CD14-positive monocyte (primary cell): ENCODE measurements at regions of chr6 and their contacts with region 1.

Region 1: DNA sequence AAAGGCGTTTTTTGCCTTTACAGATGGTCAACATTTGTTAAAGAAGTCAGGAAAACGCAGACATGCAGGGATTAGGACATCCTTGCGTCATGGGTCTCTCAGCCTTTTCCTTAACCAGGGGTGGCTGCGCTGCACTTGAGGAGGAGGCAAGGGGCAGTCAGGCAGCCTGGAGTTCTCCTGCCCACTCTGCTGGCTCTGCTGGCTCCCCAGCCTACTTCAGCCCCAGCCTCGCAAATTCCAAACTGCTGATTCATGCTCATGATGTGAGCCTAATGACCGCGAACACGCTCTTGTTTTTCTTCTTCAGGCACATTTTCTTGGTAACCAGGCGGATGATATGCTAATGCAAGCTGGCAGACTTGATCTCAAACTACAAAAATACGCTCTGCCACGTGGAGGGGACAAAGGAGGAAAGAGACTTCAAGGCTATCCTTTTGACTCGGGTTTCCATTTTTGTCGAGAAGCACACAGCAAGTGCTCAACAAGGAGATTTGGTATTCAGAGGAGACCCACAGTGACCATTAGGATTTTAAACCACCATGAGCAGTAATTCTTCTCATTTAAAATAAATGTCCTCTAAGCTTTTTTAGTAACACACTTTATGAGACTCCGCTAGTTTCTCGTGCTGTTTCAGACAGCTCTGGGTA is 290.3 kb upstream of the STXBP5 start:
- DNase-seq: peak; percentile 55 to 74 (median 61)
- H3K4me3 ChIP-seq: peak overlapping the region; percentile 30 to 71 (median 54)
- H3K4me3 Mint-ChIP-seq: peak overlapping the region; percentile 67 to 90
- H3K27ac ChIP-seq: peak overlapping the region; percentile 39 to 86
- H3K27ac Mint-ChIP-seq: peak overlapping the region; percentile 84 to 97 (median 92)
- H3K4me1 ChIP-seq: peaks cover 39 to 47% of the 10 kb centered on the region in 2 donors
- H3K4me1 Mint-ChIP-seq: peaks cover 52% of the 10 kb centered on the region
- H3K27me3 ChIP-seq: no peaks in the 10 kb centered on the region
- H3K27me3 Mint-ChIP-seq: peaks cover 0 to 9% (median 2%) of the 10 kb centered on the region in 3 donors
- CTCF ChIP-seq: no peak

Region 2: GRCh38 chr6:146679386-146679785 is 234.6 kb before region 1 on chr6:
- intact Hi-C with region 1: no loop called
- DNase-seq: peak; percentile 6 to 29 (median 16)
- H3K4me3 ChIP-seq: no peak overlapping the region
- H3K4me3 Mint-ChIP-seq: no peak overlapping the region
- H3K27ac ChIP-seq: no peak overlapping the region
- H3K27ac Mint-ChIP-seq: no peak overlapping the region
- H3K4me1 ChIP-seq: peaks cover 0 to under 1% of the 10 kb centered on the region in 2 donors
- H3K4me1 Mint-ChIP-seq: peaks cover 11% of the 10 kb centered on the region
- H3K27me3 ChIP-seq: no peaks in the 10 kb centered on the region
- H3K27me3 Mint-ChIP-seq: no peaks in the 10 kb centered on the region
- CTCF ChIP-seq: no peak

Region 3: DNA sequence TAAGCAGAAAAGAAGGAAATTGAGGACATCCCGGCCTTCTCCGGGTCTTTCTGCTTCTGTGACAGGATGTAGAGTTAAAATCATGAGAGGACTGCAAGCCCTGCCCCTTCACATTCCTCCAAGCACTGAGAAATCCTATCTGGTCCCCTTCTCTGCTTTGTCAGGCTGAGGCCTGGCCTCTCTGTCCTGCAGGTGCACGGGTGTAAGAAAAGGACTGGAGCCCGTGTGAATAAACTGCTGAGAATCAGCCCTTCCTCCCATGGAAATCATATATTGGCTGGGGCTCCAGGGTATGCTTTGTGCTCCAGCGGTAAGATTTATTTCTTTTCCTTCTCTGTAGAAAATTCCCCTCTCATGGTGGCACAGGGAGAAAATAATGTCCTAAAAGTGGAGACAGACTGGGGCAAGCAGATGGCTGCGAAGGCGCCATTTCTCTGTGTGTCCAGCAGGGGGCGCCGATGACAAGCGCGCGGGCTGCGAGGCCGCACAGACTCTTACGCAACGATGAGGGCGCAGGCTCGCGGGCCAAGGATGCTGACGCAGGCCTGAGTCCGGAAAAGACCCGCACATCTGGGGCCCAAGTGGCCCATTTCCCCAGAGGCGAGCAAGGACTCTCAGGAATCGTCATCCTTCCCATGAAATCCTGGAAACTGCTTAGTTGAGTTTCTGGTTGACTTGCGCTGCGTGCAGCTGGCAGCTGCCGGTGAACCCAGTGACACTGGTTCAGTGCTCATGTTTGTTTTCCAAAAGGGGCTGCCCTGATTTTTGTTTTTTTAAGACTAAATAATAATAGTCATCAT is 56.6 kb before region 1 on chr6:
- intact Hi-C with region 1: loop called in 1 of 2 experiments (anchors 5 kb)
- DNase-seq: peak; percentile 78 to 89 (median 82)
- H3K4me3 ChIP-seq: peak overlapping the region in 2 of 3 experiments; percentile 13 to 70
- H3K4me3 Mint-ChIP-seq: peak overlapping the region; percentile 32 to 44
- H3K27ac ChIP-seq: peak overlapping the region in 1 of 2 donors; percentile 65
- H3K27ac Mint-ChIP-seq: peak overlapping the region in 2 of 7 donors; percentile 59 to 78
- H3K4me1 ChIP-seq: peaks cover 6 to 7% of the 10 kb centered on the region in 2 donors
- H3K4me1 Mint-ChIP-seq: peaks cover 5% of the 10 kb centered on the region
- H3K27me3 ChIP-seq: no peaks in the 10 kb centered on the region
- H3K27me3 Mint-ChIP-seq: no peaks in the 10 kb centered on the region
- CTCF ChIP-seq: peak; percentile 98

Region 4: DNA sequence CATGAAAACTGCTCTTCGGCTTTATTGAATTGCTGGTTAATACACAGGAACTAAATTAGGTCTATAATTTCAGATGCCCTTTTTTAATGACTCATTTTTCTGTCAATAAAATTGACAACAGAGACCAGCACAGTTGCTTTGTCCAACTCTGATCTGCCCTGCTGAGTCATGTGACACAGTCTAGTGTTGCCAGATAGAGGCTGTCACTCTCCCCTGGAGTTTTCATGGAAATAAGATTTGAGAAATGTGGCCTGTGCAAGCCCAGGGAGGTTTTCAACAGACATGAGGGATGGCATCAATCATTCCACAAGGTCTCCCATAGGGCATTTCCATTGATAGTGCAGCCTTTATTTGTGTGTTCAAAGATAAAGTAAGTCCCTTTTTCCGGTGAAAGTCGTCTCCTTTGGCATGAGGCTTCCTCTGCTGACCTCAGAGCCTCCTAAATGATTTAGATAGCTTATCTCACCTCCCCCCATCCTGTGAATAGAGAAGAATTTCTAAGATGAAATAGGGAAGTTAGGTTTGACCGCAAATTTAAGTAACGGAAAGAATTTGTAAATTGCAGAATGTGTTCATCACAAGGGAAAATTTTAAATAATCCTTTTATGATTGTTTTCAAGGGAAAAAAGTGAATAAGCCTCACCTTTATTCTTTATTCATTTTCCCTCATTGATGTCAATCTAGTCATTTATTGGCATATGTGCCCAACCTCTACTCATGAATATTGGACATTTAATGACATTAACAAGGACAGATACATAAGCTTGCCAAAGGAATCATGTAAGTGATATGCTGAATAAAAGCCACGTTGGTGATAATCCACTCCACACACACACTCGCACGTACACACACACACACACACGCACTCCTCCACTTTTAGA is 37.5 kb before region 1 on chr6:
- intact Hi-C with region 1: loop called (anchors 5 kb)
- DNase-seq: peak; percentile 54 to 81 (median 74)
- H3K4me3 ChIP-seq: peak overlapping the region in 2 of 3 experiments; percentile 27 to 65
- H3K4me3 Mint-ChIP-seq: peak overlapping the region in 1 of 2 donors; percentile 81
- H3K27ac ChIP-seq: peak overlapping the region; percentile 51 to 85
- H3K27ac Mint-ChIP-seq: peak overlapping the region; percentile 90 to 99 (median 97)
- H3K4me1 ChIP-seq: peaks cover 40 to 52% of the 10 kb centered on the region in 2 donors
- H3K4me1 Mint-ChIP-seq: peaks cover 41% of the 10 kb centered on the region
- H3K27me3 ChIP-seq: no peaks in the 10 kb centered on the region
- H3K27me3 Mint-ChIP-seq: peaks cover 0 to 3% (median 0%) of the 10 kb centered on the region in 3 donors
- CTCF ChIP-seq: no peak

Region 5: GRCh38 chr6:147202516-147203312 is 288.7 kb after region 1 on chr6:
- intact Hi-C with region 1: loop called in 1 of 2 experiments (anchors 5 kb)
- DNase-seq: peak; percentile 91 to 96 (median 93)
- H3K4me3 ChIP-seq: peak overlapping the region; percentile 59 to 97 (median 83)
- H3K4me3 Mint-ChIP-seq: peak overlapping the region; percentile 91 to 99
- H3K27ac ChIP-seq: peak overlapping the region; percentile 72 to 90
- H3K27ac Mint-ChIP-seq: peak overlapping the region; percentile 92 to 98 (median 95)
- H3K4me1 ChIP-seq: peaks cover 16 to 27% of the 10 kb centered on the region in 2 donors
- H3K4me1 Mint-ChIP-seq: peaks cover 35% of the 10 kb centered on the region
- H3K27me3 ChIP-seq: no peaks in the 10 kb centered on the region
- H3K27me3 Mint-ChIP-seq: peaks cover 0 to 2% (median 2%) of the 10 kb centered on the region in 3 donors
- CTCF ChIP-seq: no peak